Heart left ventricle (tissue), 16 donors: ENCODE measurements at regions of chr15 and their contacts with region 1.

Region 1: DNA sequence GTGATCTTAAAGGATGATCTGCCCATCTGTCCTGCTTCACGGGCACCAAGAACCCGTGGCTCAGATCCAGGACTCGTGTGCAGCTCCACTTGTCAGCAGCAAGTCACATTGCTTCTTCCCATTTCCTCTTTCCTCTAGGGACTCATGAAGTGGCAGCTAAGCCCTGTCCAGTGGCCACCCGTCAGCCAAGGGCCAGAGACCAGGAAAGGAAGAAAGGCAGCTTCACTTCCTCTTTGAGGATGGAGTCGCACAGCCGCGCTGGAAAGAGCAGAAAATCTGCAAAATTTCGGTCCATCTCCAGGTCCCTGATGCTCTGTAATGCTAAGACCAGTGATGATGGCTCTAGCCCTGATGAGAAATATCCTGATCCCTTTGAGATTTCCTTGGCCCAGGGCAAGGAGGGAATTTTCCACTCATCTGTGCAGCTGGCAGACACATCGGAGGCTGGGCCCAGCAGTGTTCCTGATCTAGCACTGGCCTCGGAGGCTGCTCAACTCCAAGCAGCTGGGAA is 28.5 kb downstream of the IL16 start:
- DNase-seq: peak; percentile 55 to 80 (median 65)
- ATAC-seq: peak; percentile 66 to 78 (median 76)
- H3K4me3 ChIP-seq: no peak overlapping the region
- H3K27ac ChIP-seq: peak overlapping the region; percentile 23 to 85 (median 58)
- H3K4me1 ChIP-seq: peaks cover 0 to 49% (median 16%) of the 10 kb centered on the region in 12 donors
- H3K27me3 ChIP-seq: no peaks in the 10 kb centered on the region
- CTCF ChIP-seq: no peak
- POLR2A ChIP-seq: no peak

Region 2: DNA sequence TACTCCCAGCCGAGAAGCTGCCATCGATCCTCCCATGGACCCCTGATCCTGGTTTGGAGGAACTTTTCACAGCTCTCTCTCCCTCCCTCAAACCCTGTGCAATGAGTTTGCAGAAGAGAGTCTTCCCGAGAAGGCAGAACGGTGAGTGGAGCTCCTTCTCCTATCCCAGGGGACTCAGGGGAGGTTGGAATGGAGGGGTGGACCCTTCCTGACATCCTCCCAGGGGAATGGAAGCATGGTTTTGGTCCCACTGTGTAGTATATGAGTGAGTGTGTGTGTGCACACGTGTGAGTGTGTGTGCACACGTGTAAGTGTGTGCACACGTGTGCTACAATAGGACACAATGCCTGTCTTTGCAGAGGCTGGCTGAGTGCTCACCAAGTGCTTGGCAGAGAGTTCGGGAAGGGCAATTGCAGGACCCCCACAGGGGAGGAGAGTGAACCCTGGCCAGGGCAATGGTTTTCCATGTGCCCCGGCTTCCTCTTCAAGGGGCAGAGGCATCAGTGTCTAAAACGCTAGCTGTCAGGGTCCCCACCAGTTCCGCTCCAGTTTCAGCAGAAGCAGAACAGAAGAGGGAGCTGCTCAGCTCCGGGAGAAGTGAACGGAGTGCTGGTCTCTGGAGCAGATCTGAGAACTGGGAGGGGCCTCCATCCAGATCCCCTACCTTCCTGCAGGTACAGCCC is 42.3 kb before region 1 on chr15:
- intact Hi-C with region 1: loop called in 1 of 10 experiments (anchors 5 kb)
- DNase-seq: peak in 2 of 5 donors; percentile 32 to 40
- ATAC-seq: peak; percentile 55 to 78 (median 66)
- H3K4me3 ChIP-seq: peak overlapping the region in 10 of 12 donors; percentile 23 to 61 (median 40)
- H3K27ac ChIP-seq: peak overlapping the region in 11 of 12 donors; percentile 9 to 78 (median 58)
- H3K4me1 ChIP-seq: peaks cover 0 to 18% (median 0%) of the 10 kb centered on the region in 12 donors
- H3K27me3 ChIP-seq: peaks cover 0 to 12% (median 0%) of the 10 kb centered on the region in 9 donors
- CTCF ChIP-seq: peak in 4 of 12 donors; percentile 18 to 46 (median 28)
- POLR2A ChIP-seq: no peak

Region 3: GRCh38 chr15:81323944-81324881 is 99.0 kb after region 1 on chr15 and contains the start of gene STARD5:
- intact Hi-C with region 1: no loop called
- DNase-seq: peak; percentile 99 to 100 (median 99)
- ATAC-seq: peak; percentile 100
- H3K4me3 ChIP-seq: peak within 1 kb of the TSS; percentile 45 to 99 (median 78)
- H3K27ac ChIP-seq: peak within 1 kb of the TSS in 9 of 12 donors; percentile 22 to 80 (median 54)
- H3K4me1 ChIP-seq: peaks cover 0 to 18% (median 7%) of the 10 kb centered on the region in 12 donors
- H3K27me3 ChIP-seq: no peaks in the 10 kb centered on the region
- CTCF ChIP-seq: no peak
- POLR2A ChIP-seq: peak in 1 of 2 donors; percentile 75
- total RNA-seq, gene STARD5: 0.49 to 3.0 (median 1.4) TPM